K562 (cell line): ENCODE measurements at regions of chr12 and their contacts with region 1.

Region 1: GRCh38 chr12:101939856-101940265 is 62.5 kb downstream of the DRAM1 start:
- DNase-seq: peak; percentile 66 to 79 (median 67)
- ATAC-seq: peak; percentile 89
- H3K4me3 ChIP-seq: no peak overlapping the region
- H3K27ac ChIP-seq: no peak overlapping the region
- H3K4me1 ChIP-seq: no peaks in the 10 kb centered on the region; a peak in 2 of 5 replicates
- H3K27me3 ChIP-seq: peaks cover 11 to 14% of the 10 kb centered on the region in 2 experiments
- CTCF ChIP-seq: peak; percentile 72 to 91 (median 76)
- EP300 ChIP-seq: no peak
- POLR2A ChIP-seq: no peak
- RAD21 ChIP-seq: peak; percentile 93 to 95

Region 2: DNA sequence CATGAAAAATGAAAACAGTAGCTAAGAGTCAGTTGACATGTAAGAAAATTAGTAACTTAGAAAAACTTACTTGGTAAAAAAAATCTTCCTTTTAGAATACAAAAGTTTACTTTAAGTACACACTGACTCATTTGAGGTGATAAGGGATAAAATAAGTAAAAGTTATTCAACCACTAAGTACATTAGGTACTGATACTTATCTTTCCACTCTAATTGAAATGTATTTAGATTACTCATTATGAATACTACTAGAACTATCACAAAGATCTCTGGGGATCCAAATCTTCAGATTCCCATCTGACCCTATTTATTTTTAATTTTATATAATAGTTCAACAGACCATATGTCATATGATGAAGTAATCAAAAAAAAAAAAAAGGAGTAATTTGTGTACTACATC is 212.7 kb before region 1 on chr12:
- CTCF ChIA-PET with region 1: no interaction called
- POLR2A ChIA-PET with region 1: no interaction called
- in situ Hi-C with region 1: no loop called
- intact Hi-C with region 1: no loop called
- DNase-seq: no peak
- ATAC-seq: no peak
- H3K4me3 ChIP-seq: no peak overlapping the region
- H3K27ac ChIP-seq: no peak overlapping the region
- H3K4me1 ChIP-seq: no peaks in the 10 kb centered on the region
- H3K27me3 ChIP-seq: no peaks in the 10 kb centered on the region
- CTCF ChIP-seq: no peak
- EP300 ChIP-seq: no peak
- POLR2A ChIP-seq: no peak
- RAD21 ChIP-seq: no peak

Region 3: DNA sequence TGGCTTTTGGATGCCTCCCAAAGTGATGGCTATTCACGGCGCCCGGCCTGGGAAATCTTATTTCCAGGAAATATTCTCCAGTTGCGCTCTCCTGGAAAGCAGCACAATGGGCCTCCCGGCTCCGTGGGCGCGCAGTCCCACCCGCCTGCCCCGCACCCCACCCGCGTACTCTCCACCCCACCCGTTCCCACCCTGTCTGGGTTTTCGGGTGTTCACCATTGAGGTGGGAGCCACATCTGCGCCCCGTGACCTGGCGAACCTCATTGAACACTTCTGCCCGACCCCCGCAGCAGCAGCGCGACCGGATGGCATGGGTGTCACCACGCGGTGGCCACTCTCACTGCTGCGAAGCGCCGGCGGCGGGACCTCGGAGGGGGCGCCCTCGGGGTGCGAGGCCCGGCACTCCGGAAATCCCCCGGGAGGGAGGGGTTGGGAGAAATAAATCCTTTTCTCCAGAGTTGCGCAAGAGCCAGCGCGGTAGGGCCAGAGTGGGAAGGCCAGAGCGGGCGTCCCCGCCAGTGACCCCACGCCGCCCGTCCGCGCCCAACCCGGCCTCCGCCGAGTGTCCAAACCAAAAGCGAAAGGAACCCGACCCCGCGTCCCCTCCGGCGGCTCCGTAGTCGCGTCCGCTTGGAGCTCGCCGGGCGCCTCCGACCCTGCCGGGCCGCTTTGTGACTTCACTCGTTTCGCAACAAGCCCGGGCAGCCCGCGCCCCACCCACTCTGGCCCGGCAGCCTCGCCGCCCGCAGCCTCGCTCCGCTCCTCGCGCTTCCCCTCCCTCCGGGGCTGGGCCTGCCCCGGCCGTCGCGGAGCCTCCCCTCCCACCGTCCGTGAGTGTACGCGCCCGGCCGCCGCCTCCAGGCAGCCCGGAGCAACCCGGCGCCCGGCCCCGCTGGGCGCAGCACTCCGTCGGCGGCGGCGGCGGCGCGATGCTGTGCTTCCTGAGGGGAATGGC is 62.7 kb before region 1 on chr12 and contains the start of gene DRAM1:
- CTCF ChIA-PET with region 1: no interaction called
- POLR2A ChIA-PET with region 1: no interaction called
- in situ Hi-C with region 1: no loop called
- intact Hi-C with region 1: no loop called
- DNase-seq: peak; percentile 81 to 91 (median 86)
- ATAC-seq: peak; percentile 94
- H3K4me3 ChIP-seq: peak within 1 kb of the TSS; percentile 58
- H3K27ac ChIP-seq: peak within 1 kb of the TSS; percentile 87
- H3K4me1 ChIP-seq: peaks cover 14 to 17% of the 10 kb centered on the region in 2 experiments; a peak in 4 of 5 replicates
- H3K27me3 ChIP-seq: no peaks in the 10 kb centered on the region
- CTCF ChIP-seq: peak; percentile 2 to 37 (median 20); a peak in 4 of 6 replicates
- EP300 ChIP-seq: no peak
- POLR2A ChIP-seq: peak; percentile 77
- RAD21 ChIP-seq: no peak
- polyA plus RNA-seq, gene DRAM1: 1.5 to 2.0 TPM

Region 4: GRCh38 chr12:102043928-102044327 is 104.1 kb after region 1 on chr12:
- CTCF ChIA-PET with region 1: no interaction called
- POLR2A ChIA-PET with region 1: no interaction called
- in situ Hi-C with region 1: no loop called
- intact Hi-C with region 1: no loop called
- DNase-seq: peak in 2 of 4 experiments; percentile 21
- ATAC-seq: peak; percentile 63; the same call in 2 of the 3 replicates
- H3K4me3 ChIP-seq: no peak overlapping the region
- H3K27ac ChIP-seq: no peak overlapping the region
- H3K4me1 ChIP-seq: no peaks in the 10 kb centered on the region; a peak in 1 of 5 replicates
- H3K27me3 ChIP-seq: no peaks in the 10 kb centered on the region
- CTCF ChIP-seq: no peak
- EP300 ChIP-seq: no peak
- POLR2A ChIP-seq: no peak
- RAD21 ChIP-seq: no peak

Region 5: GRCh38 chr12:102484428-102484958 is 544.6 kb after region 1 on chr12:
- CTCF ChIA-PET with region 1: interaction called, 3 read pairs
- POLR2A ChIA-PET with region 1: no interaction called
- in situ Hi-C with region 1: loop called (anchors 25 kb)
- intact Hi-C with region 1: loop called (anchors 2 kb)
- DNase-seq: peak; percentile 64 to 73 (median 68)
- ATAC-seq: peak; percentile 68
- H3K4me3 ChIP-seq: no peak overlapping the region
- H3K27ac ChIP-seq: no peak overlapping the region
- H3K4me1 ChIP-seq: peaks cover 0 to 7% of the 10 kb centered on the region in 2 experiments; a peak in 3 of 5 replicates
- H3K27me3 ChIP-seq: no peaks in the 10 kb centered on the region
- CTCF ChIP-seq: peak; percentile 68 to 85 (median 82)
- EP300 ChIP-seq: no peak
- POLR2A ChIP-seq: no peak
- RAD21 ChIP-seq: peak; percentile 54 to 71

Region 6: GRCh38 chr12:102702447-102703114 is 762.7 kb after region 1 on chr12:
- CTCF ChIA-PET with region 1: no interaction called
- POLR2A ChIA-PET with region 1: no interaction called
- in situ Hi-C with region 1: no loop called
- intact Hi-C with region 1: loop called (anchors 1 kb)
- DNase-seq: peak; percentile 63 to 71 (median 69)
- ATAC-seq: peak; percentile 86
- H3K4me3 ChIP-seq: no peak overlapping the region
- H3K27ac ChIP-seq: no peak overlapping the region
- H3K4me1 ChIP-seq: no peaks in the 10 kb centered on the region
- H3K27me3 ChIP-seq: no peaks in the 10 kb centered on the region
- CTCF ChIP-seq: peak; percentile 63 to 72 (median 69)
- EP300 ChIP-seq: no peak
- POLR2A ChIP-seq: no peak
- RAD21 ChIP-seq: peak; percentile 58 to 78

Region 7: GRCh38 chr12:102769319-102769916 is 829.6 kb after region 1 on chr12:
- CTCF ChIA-PET with region 1: interaction called, 5 read pairs
- POLR2A ChIA-PET with region 1: no interaction called
- in situ Hi-C with region 1: no loop called
- intact Hi-C with region 1: loop called (anchors 2 kb)
- DNase-seq: peak; percentile 45 to 57 (median 50)
- ATAC-seq: peak; percentile 96
- H3K4me3 ChIP-seq: no peak overlapping the region
- H3K27ac ChIP-seq: no peak overlapping the region
- H3K4me1 ChIP-seq: no peaks in the 10 kb centered on the region
- H3K27me3 ChIP-seq: peaks cover 0 to 3% of the 10 kb centered on the region in 2 experiments; a peak in 1 of 5 replicates
- CTCF ChIP-seq: peak; percentile 63 to 83 (median 68)
- EP300 ChIP-seq: no peak
- POLR2A ChIP-seq: no peak
- RAD21 ChIP-seq: peak; percentile 71 to 78

Region 8: GRCh38 chr12:102879144-102879763 is 939.4 kb after region 1 on chr12:
- CTCF ChIA-PET with region 1: interaction called, 5 read pairs
- POLR2A ChIA-PET with region 1: no interaction called
- in situ Hi-C with region 1: no loop called
- intact Hi-C with region 1: loop called (anchors 5 kb)
- DNase-seq: peak; percentile 10 to 47 (median 16)
- ATAC-seq: peak; percentile 81
- H3K4me3 ChIP-seq: no peak overlapping the region
- H3K27ac ChIP-seq: no peak overlapping the region
- H3K4me1 ChIP-seq: no peaks in the 10 kb centered on the region
- H3K27me3 ChIP-seq: no peaks in the 10 kb centered on the region
- CTCF ChIP-seq: peak; percentile 52 to 65 (median 57)
- EP300 ChIP-seq: no peak
- POLR2A ChIP-seq: no peak
- RAD21 ChIP-seq: peak; percentile 55 to 70